Aorta (tissue), 5 donors: ENCODE measurements at regions of chr20 and their contacts with region 1.

Region 1: GRCh38 chr20:924639-925038 is 8.5 kb upstream of the ANGPT4 start:
- DNase-seq: no peak
- ATAC-seq: no peak
- H3K4me3 ChIP-seq: no peak overlapping the region
- H3K27ac ChIP-seq: no peak overlapping the region
- H3K4me1 ChIP-seq: no peaks in the 10 kb centered on the region
- H3K27me3 ChIP-seq: peaks cover 0 to 1% of the 10 kb centered on the region in 2 donors

Region 2: DNA sequence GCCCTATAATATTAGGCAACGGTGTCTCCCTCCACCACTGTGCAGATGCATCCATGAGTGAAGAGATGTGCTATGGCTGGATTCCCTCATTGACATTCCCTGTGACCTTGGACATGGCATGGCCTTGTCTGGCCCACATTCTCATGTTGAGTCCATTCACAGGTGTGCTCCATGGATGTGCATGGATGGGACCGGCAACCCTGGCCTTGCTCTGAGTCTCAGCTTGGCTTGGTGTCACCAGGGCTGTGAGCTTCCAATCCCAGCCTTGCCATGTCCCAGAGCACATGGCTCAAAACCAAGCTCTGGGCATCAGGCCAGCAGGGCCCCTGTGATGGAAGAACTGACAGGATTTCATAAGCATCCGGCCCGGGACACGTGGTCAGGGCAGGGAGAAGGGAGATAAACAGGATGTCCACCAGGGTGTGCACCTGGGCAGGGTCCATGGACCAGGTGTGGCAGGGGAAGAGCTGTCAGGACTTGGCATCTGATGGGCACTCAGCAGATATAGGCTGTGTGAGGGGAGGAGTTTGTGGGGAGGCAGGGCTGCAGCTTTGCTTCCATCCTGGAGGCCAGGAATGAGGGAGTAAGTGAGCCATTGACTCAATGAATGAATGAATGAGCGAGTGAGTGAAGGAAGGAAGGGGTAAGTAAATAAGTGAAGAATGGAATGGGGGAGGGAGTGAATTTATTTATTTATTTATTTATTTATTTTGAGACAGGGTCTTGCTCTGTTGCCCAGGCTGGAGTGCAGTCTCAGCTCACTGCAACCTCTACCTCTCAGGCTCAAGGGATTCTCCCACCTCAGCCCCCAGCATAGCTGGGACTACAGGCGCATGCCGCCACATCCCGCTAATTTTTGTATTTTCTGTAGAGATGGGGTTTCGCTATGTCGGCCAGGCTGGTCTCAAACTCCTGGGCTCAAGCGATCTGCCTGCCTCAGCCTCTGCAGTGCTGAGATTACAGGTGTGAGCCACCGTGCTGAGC is 562.1 kb before region 1 on chr20:
- intact Hi-C with region 1: loop called in 1 of 2 experiments (anchors 10 kb)
- DNase-seq: peak; percentile 90 to 94
- ATAC-seq: peak; percentile 58
- H3K4me3 ChIP-seq: no peak overlapping the region
- H3K27ac ChIP-seq: no peak overlapping the region
- H3K4me1 ChIP-seq: no peaks in the 10 kb centered on the region
- H3K27me3 ChIP-seq: no peaks in the 10 kb centered on the region

Region 3: GRCh38 chr20:760751-761417 is 163.8 kb before region 1 on chr20:
- intact Hi-C with region 1: no loop called
- DNase-seq: peak in 1 of 2 donors; percentile 49
- ATAC-seq: peak; percentile 45
- H3K4me3 ChIP-seq: no peak overlapping the region
- H3K27ac ChIP-seq: no peak overlapping the region
- H3K4me1 ChIP-seq: no peaks in the 10 kb centered on the region
- H3K27me3 ChIP-seq: peaks cover 0 to 2% of the 10 kb centered on the region in 2 donors